ENCODE measurements at regions of chr22 and their contacts with region 1.

Region 1: DNA sequence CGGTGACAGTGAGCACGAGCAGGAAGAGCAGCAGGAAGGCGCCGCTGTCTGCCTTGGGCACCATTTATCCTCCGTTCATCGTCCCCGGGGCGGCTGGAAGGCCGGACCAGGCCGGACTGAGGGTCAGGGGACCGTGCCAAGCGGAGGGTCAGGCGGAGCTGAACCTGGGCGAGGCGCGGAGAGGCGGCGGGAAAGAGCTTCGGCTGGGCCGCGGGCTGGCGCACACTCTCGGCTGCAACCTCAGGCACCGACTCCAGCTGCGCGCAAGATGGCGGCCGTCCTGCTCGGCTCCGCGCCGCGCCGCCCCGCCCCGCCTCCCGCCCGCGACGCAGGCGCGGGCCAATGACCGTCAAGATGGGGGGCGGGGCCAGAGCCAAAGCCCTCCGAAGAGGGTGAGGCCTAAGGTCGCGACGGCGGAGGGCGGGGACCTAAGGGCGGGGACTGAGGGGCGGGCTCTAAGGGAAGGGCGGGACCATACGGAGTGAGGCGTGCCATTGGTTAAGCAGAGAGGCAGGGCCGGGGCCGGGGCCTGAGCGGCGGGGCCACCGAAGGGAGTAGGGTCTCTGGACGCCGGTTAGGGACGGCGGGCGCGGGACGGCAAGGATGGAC is at the start of gene DGCR2:
- DNase-seq: peak; percentile 87
- ATAC-seq: peak; percentile 97
- H3K4me3 Mint-ChIP-seq: peak within 1 kb of the TSS; percentile 89
- H3K27ac Mint-ChIP-seq: peak within 1 kb of the TSS; percentile 74
- H3K4me1 Mint-ChIP-seq: peaks cover 50% of the 10 kb centered on the region
- H3K27me3 Mint-ChIP-seq: no peaks in the 10 kb centered on the region
- CTCF ChIP-seq: no peak
- total RNA-seq, gene DGCR2: 29.3 and 33.2 TPM in 2 replicates

Region 2: DNA sequence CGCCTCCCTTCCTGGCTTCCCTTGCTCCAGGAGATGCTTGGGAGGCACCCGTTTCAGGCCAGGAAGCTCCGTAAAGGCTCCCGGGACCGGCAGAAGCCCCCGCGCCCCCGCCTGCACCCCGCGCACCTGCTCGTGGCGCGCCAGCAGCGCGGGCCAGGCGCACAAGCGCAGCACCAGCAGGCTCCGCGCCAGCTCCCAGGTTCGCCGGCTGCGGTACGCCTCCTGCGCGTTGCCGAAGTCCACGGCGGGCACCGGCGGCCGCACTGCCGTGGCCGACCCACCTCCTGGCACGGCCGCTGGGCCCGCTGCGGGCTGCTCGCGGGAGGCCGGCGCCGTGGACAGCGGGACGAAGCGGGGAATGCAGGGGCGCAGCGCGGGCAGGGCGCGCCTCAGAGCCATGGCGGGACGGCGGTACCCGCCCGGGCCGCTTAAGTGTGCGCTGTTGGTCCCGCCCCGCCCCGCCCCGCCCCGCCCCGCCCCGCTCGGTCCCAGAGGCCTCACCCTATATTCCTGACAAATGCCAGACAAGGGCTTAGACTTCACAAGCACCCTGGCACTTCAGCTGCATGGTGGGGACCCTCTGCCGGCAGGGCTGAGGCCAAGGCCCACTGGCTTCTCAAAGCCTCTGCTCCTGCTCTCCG is 186.2 kb before region 1 on chr22 and contains the start of gene PRODH:
- CTCF ChIA-PET with region 1: no interaction called
- POLR2A ChIA-PET with region 1: no interaction called
- intact Hi-C with region 1: no loop called
- DNase-seq: no peak
- ATAC-seq: no peak
- H3K4me3 Mint-ChIP-seq: no peak within 1 kb of the TSS
- H3K27ac Mint-ChIP-seq: no peak within 1 kb of the TSS
- H3K4me1 Mint-ChIP-seq: no peaks in the 10 kb centered on the region
- H3K27me3 Mint-ChIP-seq: no peaks in the 10 kb centered on the region
- CTCF ChIP-seq: no peak
- total RNA-seq, gene PRODH: not detected in 2 replicates

Region 3: GRCh38 chr22:19052941-19053541 is 69.2 kb before region 1 on chr22:
- CTCF ChIA-PET with region 1: no interaction called
- POLR2A ChIA-PET with region 1: no interaction called
- intact Hi-C with region 1: no loop called
- DNase-seq: no peak
- ATAC-seq: no peak
- H3K4me3 Mint-ChIP-seq: no peak overlapping the region
- H3K27ac Mint-ChIP-seq: no peak overlapping the region
- H3K4me1 Mint-ChIP-seq: no peaks in the 10 kb centered on the region
- H3K27me3 Mint-ChIP-seq: no peaks in the 10 kb centered on the region
- CTCF ChIP-seq: no peak

Region 4: DNA sequence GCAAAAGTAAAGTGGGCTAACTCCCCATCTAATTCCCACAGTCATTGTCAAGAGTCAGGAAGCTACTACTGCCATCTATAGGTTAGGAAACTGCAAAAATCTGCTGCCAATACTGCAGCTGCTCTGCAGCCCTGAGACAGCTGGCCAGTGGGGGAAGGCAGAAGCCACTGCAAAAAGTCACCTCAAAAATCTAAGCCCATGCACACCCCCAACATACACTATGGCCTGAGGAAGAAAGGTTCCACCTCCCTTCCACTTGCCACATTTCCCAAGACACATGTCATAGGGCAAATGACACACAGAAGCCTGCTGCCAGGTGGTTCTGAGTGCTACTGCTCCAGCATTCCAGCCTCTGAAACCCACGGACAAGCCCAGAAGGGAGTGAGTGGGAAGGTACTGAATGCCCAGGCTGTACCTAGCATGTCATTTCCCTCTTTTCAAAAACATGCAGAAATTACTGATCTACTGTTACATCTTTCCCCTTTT is 37.0 kb before region 1 on chr22:
- CTCF ChIA-PET with region 1: no interaction called
- POLR2A ChIA-PET with region 1: no interaction called
- intact Hi-C with region 1: loop called (anchors 5 kb)
- DNase-seq: no peak
- ATAC-seq: no peak
- H3K4me3 Mint-ChIP-seq: peak overlapping the region; percentile 63
- H3K27ac Mint-ChIP-seq: peak overlapping the region; percentile 67
- H3K4me1 Mint-ChIP-seq: peaks cover 32% of the 10 kb centered on the region
- H3K27me3 Mint-ChIP-seq: no peaks in the 10 kb centered on the region
- CTCF ChIP-seq: no peak

Region 5: GRCh38 chr22:19109198-19110067 is 12.8 kb before region 1 on chr22:
- CTCF ChIA-PET with region 1: interaction called, 4 read pairs
- POLR2A ChIA-PET with region 1: interaction called, 5 read pairs
- intact Hi-C with region 1: loop called (anchors 1 kb)
- DNase-seq: no peak
- ATAC-seq: peak; percentile 95
- H3K4me3 Mint-ChIP-seq: peak overlapping the region; percentile 67
- H3K27ac Mint-ChIP-seq: peak overlapping the region; percentile 85
- H3K4me1 Mint-ChIP-seq: peaks cover 60% of the 10 kb centered on the region
- H3K27me3 Mint-ChIP-seq: no peaks in the 10 kb centered on the region
- CTCF ChIP-seq: no peak

Region 6: GRCh38 chr22:19187716-19188563 is 65.7 kb after region 1 on chr22:
- CTCF ChIA-PET with region 1: no interaction called
- POLR2A ChIA-PET with region 1: no interaction called
- intact Hi-C with region 1: no loop called
- DNase-seq: no peak
- ATAC-seq: no peak
- H3K4me3 Mint-ChIP-seq: no peak overlapping the region
- H3K27ac Mint-ChIP-seq: no peak overlapping the region
- H3K4me1 Mint-ChIP-seq: no peaks in the 10 kb centered on the region
- H3K27me3 Mint-ChIP-seq: no peaks in the 10 kb centered on the region
- CTCF ChIP-seq: no peak

Region 7: DNA sequence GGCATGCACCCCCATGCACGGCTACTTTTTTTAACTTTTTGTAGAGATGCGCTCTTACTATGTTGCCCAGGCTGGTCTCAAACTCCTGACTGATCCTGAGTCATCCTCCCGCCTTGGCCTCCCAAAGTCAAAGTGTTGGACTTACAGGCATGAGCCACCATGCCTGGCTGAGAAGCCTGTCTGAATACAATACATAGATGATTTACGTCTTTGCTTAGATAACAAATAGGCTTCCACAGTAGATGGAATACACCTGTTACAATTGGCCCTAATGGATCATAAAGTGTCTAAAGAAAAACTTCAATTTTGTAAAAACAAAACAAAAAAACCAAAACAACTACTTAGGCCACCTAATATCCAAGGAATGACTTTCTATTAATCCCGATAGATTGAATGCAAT is 182.3 kb after region 1 on chr22:
- CTCF ChIA-PET with region 1: no interaction called
- POLR2A ChIA-PET with region 1: no interaction called
- intact Hi-C with region 1: no loop called
- DNase-seq: no peak
- ATAC-seq: no peak
- H3K4me3 Mint-ChIP-seq: no peak overlapping the region
- H3K27ac Mint-ChIP-seq: no peak overlapping the region
- H3K4me1 Mint-ChIP-seq: no peaks in the 10 kb centered on the region
- H3K27me3 Mint-ChIP-seq: no peaks in the 10 kb centered on the region
- CTCF ChIP-seq: no peak

Region 8: GRCh38 chr22:19432133-19432851 is 310.0 kb after region 1 on chr22 and contains the start of gene MRPL40:
- CTCF ChIA-PET with region 1: no interaction called
- POLR2A ChIA-PET with region 1: interaction called, 5 read pairs
- intact Hi-C with region 1: loop called (anchors 1 kb)
- DNase-seq: peak; percentile 83
- ATAC-seq: peak; percentile 87
- H3K4me3 Mint-ChIP-seq: peak within 1 kb of the TSS; percentile 90
- H3K27ac Mint-ChIP-seq: peak within 1 kb of the TSS; percentile 91
- H3K4me1 Mint-ChIP-seq: peaks cover 59% of the 10 kb centered on the region
- H3K27me3 Mint-ChIP-seq: no peaks in the 10 kb centered on the region
- CTCF ChIP-seq: no peak
- total RNA-seq, gene MRPL40: 24.0 and 24.3 TPM in 2 replicates